Activated CD4-positive, alpha-beta memory T cell treated with anti-CD3 and anti-CD28 coated beads for 36 hours (primary cell): ENCODE measurements at regions of chr17 and their contacts with region 1.

Region 1: GRCh38 chr17:66673668-66674315 is 161.1 kb upstream of the CACNG5 start:
- DNase-seq: peak; percentile 54
- H3K4me3 Mint-ChIP-seq: peak overlapping the region; percentile 27
- H3K27ac Mint-ChIP-seq: peak overlapping the region; percentile 83
- H3K4me1 Mint-ChIP-seq: peaks cover 68% of the 10 kb centered on the region
- H3K27me3 Mint-ChIP-seq: no peaks in the 10 kb centered on the region

Region 2: DNA sequence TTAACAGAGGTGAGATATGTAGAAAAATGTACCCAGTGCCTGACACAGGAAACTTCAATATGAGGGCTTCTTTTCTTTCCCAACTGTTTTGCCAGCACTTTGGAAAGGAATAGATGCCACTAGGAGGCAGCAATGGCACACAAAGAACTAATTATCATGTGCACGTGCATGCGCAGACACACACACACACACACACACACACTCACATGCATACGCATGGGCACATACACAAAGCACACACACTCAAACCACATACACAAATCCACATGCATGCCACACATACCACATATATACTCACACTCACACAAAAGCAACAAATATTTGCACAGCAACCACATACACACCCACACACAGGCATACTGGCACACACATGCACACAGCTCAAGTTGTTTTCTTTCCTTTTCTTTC is 473.1 kb before region 1 on chr17:
- CTCF ChIA-PET with region 1: interaction called, 5 read pairs
- POLR2A ChIA-PET with region 1: no interaction called
- intact Hi-C with region 1: loop called (anchors 2 kb)
- DNase-seq: peak; percentile 59
- H3K4me3 Mint-ChIP-seq: no peak overlapping the region
- H3K27ac Mint-ChIP-seq: no peak overlapping the region
- H3K4me1 Mint-ChIP-seq: peaks cover 16% of the 10 kb centered on the region
- H3K27me3 Mint-ChIP-seq: no peaks in the 10 kb centered on the region

Region 3: DNA sequence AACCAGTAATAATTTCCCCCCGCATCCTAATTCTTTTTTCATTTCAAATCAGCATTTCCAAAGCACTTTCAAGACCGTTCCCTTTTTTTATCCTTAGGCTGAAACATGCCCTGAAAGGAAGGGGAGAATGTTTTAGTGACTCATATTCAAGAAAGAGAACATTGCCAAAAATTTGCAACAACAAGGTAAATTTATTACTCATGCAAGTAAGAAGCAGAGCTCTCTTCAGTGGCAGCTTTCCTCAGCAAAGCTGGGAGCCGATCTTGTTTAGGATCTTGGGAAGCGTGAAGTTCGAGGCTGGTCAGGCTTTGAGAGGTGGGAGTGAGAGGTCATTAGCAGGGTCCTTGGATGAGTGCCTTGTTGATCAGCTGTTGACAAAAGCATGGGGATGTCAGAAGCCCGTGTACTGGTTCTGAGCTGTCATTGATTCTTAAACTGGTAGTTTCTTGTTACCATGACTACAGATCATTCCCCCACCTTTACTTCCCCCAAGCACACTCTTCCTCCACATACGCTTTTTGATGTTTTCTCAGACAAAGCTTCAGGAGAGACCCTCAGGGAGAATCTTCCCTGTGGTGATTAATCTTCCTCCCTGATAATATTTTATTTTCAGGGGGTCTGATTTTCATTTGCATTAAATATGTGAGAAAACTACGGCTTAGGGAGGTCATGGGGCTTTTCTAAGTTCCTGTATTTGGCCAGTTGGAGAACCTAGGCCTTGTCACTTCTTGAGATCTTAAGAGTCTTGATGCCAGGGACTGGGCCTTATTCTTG is 241.7 kb before region 1 on chr17:
- CTCF ChIA-PET with region 1: no interaction called
- POLR2A ChIA-PET with region 1: no interaction called
- intact Hi-C with region 1: loop called (anchors 10 kb)
- DNase-seq: no peak
- H3K4me3 Mint-ChIP-seq: no peak overlapping the region
- H3K27ac Mint-ChIP-seq: no peak overlapping the region
- H3K4me1 Mint-ChIP-seq: peaks cover 54% of the 10 kb centered on the region
- H3K27me3 Mint-ChIP-seq: no peaks in the 10 kb centered on the region

Region 4: DNA sequence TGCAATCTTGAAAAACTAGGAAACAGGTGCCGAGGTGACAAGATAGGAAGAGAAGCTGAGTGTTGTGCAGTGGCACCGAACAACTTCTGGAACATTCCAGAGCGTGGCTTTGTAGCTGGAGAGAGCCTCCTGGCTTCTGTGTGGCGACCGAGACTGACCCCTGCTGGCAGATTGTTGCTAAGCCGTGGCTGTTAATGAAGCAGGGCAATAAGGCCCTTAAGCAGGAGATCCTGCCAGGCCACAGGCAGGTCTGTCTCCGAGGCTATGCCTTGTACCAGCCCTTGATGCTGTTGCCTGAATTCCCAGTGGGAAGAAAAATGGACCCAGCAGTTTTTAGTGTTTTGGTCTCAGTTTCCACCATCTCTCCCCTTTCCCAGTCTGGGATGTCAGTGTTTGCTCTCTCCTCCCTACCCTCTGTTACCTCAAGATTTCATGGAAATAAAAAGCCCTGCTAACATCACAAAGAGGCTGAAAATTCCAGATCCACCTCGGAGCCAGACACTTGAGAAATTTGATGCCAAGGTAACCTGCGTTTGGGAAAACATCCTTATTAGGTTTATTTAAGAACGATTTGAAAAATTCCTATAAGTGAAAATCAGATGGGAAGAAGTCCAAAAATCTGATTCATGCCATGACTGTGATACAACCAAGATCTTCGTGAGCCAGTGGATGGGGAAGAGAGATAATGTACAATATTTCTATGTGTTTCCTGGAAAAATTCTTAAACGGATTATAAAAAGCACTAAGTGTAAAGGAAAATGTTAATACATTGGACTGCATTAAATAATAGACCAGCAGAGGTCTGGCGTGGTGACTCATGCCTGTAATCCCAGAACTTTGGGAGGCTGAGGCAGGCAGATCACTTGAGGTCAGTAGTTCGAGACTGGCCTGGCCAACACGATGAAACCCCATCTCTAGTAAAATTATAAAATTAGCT is 106.3 kb before region 1 on chr17:
- CTCF ChIA-PET with region 1: no interaction called
- POLR2A ChIA-PET with region 1: no interaction called
- intact Hi-C with region 1: loop called (anchors 5 kb)
- DNase-seq: peak; percentile 87
- H3K4me3 Mint-ChIP-seq: no peak overlapping the region
- H3K27ac Mint-ChIP-seq: no peak overlapping the region
- H3K4me1 Mint-ChIP-seq: peaks cover 40% of the 10 kb centered on the region
- H3K27me3 Mint-ChIP-seq: no peaks in the 10 kb centered on the region

Region 5: GRCh38 chr17:66655861-66656260 is 17.9 kb before region 1 on chr17:
- CTCF ChIA-PET with region 1: interaction called, 3 read pairs
- POLR2A ChIA-PET with region 1: no interaction called
- intact Hi-C with region 1: loop called (anchors 1 kb)
- DNase-seq: peak; percentile 85
- H3K4me3 Mint-ChIP-seq: no peak overlapping the region
- H3K27ac Mint-ChIP-seq: peak overlapping the region; percentile 68
- H3K4me1 Mint-ChIP-seq: peaks cover 54% of the 10 kb centered on the region
- H3K27me3 Mint-ChIP-seq: no peaks in the 10 kb centered on the region